ENCODE measurements at regions of chr16 and their contacts with region 1.

Region 1: DNA sequence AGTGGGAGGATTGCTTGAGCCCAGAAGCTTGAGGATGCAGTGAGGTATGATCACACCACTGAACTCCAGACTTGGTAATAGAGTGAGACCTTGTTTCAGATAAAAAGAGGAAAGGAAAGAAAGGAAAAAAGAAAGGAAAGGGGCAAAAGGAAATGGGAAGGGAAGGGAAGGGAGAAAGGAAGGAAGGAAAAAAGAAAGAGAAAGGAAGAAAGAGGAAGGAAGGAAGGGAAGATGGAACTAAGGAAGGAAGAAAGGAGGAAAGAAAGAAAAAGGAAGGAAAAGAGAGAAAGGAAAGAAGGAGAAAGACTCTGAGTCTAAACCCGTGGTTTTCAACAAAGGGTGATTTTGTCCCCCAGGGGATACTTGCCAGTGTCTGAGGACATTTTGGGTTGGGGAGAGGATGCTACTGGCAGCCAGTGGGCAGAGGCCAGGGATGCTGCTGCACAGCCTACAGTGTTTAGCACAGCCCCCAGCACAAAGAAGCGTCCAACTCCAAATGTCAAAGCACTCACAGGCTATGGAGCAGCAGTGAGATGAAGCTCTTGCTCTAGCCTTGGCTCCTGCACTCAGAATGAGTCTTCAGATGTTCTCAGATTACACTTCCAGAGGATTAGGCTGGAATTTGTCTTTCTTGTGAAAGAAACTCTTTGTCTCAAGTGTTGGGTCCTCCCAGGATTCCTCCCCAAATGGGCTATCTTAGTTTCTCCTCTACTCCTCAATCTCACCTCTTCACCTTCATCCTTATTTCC is 64.2 kb downstream of the BMERB1 start:
- DNase-seq: no peak
- H3K4me3 ChIP-seq: no peak overlapping the region
- H3K27me3 ChIP-seq: no peaks in the 10 kb centered on the region
- CTCF ChIP-seq: no peak

Region 2: GRCh38 chr16:15509593-15510535 is 11.3 kb after region 1 on chr16:
- CTCF ChIA-PET with region 1: interaction called, 11 read pairs
- POLR2A ChIA-PET with region 1: interaction called, 3 read pairs
- DNase-seq: no peak
- H3K4me3 ChIP-seq: no peak overlapping the region
- H3K27me3 ChIP-seq: no peaks in the 10 kb centered on the region
- CTCF ChIP-seq: peak; percentile 22; the same call in 1 of the 2 replicates